ENCODE measurements at regions of chr9 and their contacts with region 1.

Region 1: DNA sequence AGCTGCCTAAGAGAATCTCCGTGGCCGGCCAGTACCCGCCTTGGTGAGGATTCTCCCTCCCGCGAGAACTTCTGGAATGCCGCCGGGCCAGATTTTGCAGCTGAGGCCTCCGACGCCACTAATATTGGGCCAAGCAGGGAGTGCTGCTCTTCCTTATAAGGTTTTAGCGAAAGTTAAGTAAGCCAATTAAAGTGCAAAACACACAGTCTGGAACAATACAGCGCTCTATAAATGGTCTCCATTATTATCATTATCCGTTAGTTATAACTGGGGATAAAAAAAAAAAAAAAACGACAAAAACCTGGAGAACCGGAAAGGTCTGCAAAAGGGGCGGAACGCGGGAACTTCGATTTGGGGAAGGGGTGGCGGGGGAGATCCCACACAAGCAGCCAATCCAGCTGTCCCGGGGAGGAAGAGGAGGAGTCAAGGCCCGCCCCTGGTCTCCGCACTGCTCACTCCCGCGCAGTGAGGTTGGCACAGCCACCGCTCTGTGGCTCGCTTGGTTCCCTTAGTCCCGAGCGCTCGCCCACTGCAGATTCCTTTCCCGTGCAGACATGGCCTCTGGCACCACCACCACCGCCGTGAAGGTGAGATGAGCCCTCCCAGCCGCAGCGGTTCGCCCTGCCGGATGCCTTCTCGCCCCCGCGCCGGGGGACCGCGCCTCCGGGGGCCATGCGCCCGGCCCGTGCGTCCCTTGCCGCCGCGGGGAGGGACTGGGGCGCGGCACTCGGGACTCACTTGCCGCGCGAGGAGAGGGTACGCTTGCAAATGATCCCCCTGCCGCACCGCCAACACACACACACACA is at the start of gene MTAP:
- DNase-seq: peak; percentile 95
- H3K4me3 ChIP-seq: peak within 1 kb of the TSS; percentile 74
- CTCF ChIP-seq: no peak

Region 2: DNA sequence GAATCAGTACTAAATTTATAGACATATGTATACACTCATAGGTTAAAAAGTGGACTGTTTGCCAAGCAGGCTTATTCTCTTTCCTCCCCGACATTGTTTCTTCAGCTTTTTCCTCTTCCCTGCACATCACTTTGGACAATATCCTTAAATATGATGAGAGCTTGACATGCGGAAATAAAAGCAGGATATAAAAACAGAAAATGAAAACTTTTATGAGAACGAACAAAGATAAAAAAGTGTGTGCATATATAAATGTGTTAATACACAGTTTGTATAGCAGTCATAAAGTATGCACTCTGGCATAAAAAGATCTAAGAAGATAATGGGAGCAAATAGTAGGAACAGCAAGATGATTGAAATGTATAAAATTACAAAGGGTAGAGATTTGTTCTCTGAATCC is 233.9 kb before region 1 on chr9:
- in situ Hi-C with region 1: no loop called
- DNase-seq: no peak
- H3K4me3 ChIP-seq: no peak overlapping the region
- CTCF ChIP-seq: no peak

Region 3: GRCh38 chr9:21862871-21863270 is 60.5 kb after region 1 on chr9:
- in situ Hi-C with region 1: no loop called
- DNase-seq: no peak
- H3K4me3 ChIP-seq: no peak overlapping the region
- CTCF ChIP-seq: no peak

Region 4: GRCh38 chr9:21943464-21943863 is 141.1 kb after region 1 on chr9:
- in situ Hi-C with region 1: no loop called
- DNase-seq: no peak
- H3K4me3 ChIP-seq: no peak overlapping the region
- CTCF ChIP-seq: no peak

Region 5: DNA sequence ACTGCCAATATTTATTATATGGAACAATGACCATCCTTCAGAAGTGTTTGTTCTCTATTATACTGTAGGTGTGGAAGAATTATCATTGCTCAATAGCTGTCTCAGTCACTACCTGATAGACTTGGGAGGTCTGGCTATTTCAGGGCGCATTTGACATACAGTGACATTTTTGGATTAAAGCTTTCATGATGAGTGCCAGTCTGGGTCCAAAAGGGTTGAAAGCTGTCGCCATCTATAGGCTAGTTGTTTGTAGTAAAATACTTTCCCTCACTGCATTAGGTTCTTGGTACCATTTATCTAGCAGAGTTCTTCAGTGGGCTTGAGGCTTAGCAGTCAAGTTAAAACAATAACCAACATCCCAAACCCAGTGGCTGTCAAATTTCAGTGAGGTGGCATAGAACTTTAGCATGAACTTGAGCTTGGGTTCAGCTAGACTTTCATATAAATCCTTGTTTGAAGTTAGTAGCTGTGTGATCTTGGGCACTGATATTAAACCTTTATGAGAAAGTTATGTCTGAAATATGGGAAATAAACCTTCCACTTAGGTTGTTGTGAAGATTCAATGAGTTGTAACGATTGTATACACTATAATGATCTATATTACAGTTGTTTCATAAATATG is 317.2 kb after region 1 on chr9:
- in situ Hi-C with region 1: loop called (anchors 25 kb)
- DNase-seq: peak; percentile 63
- H3K4me3 ChIP-seq: no peak overlapping the region
- CTCF ChIP-seq: peak; percentile 59

Region 6: DNA sequence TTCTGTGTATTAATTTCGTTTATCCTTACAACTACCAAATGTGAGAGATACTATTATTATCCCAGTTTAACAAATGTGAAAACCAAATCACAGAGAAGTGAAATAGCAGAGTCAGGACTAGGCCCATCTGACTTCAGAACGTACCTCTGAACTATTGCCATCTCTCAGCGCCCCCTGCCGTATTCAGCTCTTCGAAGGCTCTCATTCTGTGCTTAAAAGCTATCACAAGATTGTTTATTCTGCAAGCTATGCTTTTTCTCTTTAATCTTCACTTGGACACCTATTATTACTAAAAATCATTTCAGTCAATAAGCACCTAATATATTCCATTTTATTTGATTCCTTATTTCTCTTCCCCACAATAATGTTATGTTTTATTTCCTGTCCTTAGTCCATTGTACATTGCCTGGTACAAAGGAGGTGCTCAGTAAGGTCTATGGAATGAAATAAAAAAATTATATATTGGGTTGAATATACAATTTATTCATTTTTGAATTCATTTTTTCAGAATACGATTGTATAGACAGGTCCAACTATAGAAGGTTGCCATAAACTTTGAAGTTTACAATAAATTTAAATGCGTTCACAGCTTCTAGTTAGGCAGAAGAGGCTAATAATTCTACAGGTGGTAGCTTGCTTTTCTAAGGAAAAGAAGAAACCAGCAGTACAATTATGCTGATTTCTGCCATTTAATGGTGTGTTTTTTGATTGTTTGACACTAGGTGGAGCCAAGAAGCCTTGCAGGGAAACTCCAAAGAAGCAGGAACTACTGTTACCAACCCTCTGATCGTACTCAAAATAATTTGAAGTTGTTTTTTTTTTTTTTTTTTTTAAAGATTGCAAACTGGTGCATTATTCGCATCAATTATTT is 442.0 kb after region 1 on chr9:
- in situ Hi-C with region 1: loop called (anchors 25 kb)
- DNase-seq: peak; percentile 72
- H3K4me3 ChIP-seq: no peak overlapping the region
- CTCF ChIP-seq: peak; percentile 70